ENCODE measurements at regions of chr1 and their contacts with region 1.

Region 1: DNA sequence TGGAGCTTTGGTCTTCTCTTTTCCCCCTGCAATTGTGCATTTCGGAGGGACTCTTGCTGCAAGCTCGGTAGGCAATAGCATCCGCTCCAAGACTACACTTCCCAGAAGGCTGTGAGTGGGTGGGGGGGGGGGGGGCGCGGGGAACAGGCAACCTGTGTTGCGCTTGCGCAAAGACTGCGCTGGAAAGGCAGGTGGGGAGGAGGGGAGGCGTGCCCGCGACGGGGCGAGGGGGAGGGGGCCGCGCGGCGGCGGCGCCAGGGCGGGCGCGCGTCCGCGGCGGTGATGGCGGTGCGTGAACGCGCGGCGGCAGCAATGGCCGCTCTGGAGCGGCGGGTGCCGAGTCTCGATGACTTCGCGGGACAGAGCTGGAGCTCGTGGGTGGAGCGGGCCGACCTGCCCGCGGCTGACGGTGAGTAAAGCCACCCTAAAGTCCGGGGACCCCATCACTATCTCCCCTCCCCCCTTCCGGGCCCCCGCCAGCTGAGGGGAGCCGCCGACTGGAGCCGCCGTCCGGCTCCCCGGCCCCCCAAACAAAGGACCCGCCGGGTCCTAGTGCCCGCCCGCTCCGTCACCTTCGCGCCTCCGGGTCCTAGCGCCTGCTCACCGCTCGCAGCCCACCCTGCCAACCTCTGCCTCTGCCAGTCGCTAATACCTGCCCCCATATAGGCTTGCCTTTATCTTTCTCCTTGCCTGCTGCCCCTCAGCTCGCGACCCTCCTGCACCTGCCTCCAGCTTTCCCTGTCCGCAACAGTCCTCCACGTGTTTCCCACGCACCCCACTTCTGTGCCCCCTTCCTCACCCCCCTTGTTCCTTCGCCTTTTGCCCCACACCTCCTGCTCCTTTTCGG is at the start of gene ATXN7L2:
- DNase-seq: peak; percentile 95
- ATAC-seq: peak; percentile 83
- H3K4me3 Mint-ChIP-seq: peak within 1 kb of the TSS; percentile 96
- H3K27ac Mint-ChIP-seq: peak within 1 kb of the TSS; percentile 93
- H3K4me1 Mint-ChIP-seq: peaks cover 28% of the 10 kb centered on the region
- H3K27me3 Mint-ChIP-seq: peaks cover 12% of the 10 kb centered on the region
- total RNA-seq, gene ATXN7L2: 10.4 to 12.4 TPM

Region 2: GRCh38 chr1:109426278-109427170 is 57.4 kb before region 1 on chr1 and contains the start of gene PSMA5:
- POLR2A ChIA-PET with region 1: interaction called, 37 read pairs
- DNase-seq: peak; percentile 89
- ATAC-seq: peak; percentile 93
- H3K4me3 Mint-ChIP-seq: peak within 1 kb of the TSS; percentile 93
- H3K27ac Mint-ChIP-seq: peak within 1 kb of the TSS; percentile 97
- H3K4me1 Mint-ChIP-seq: peaks cover 27% of the 10 kb centered on the region
- H3K27me3 Mint-ChIP-seq: no peaks in the 10 kb centered on the region
- total RNA-seq, gene PSMA5: 135 TPM

Region 3: DNA sequence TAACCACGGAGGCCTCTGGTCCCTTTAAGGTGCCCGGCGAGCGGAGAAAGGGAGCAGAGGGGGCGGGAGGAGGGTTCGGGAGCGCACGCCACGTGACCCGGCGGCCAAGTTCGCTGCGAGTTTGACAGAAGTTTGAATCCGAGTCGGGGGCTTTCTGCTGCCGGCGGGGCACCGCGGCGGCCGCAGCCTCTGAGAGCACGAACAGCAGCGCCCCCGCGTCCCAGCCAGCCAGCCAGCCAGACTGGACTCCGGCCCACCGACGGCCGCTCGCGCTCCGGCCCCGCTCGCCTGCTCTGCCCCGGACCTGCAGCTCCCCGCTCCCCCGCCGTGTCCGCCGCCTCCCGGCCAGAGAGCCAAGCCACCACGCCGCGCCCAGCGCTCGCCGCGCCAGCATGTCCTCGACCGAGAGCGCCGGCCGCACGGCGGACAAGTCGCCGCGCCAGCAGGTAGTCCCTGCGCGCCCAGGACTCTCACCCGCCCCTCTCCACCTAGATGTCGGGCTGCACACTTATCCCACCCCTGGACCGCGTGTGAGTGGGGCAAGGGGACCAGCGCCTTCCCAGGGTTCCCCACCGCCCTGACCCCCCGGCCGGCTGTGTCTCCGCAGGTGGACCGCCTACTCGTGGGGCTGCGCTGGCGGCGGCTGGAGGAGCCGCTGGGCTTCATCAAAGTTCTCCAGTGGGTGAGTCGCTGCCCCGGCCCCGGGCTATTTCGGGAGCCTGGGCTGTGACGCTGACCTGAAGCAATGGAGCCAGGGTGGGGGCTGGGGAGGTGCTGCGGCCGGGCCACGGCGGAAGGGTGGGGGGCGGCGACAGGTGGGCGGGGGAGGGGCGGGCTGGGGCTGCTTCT is 17.2 kb before region 1 on chr1 and contains the start of gene SYPL2:
- POLR2A ChIA-PET with region 1: no interaction called
- DNase-seq: peak; percentile 39
- ATAC-seq: peak; percentile 30
- H3K4me3 Mint-ChIP-seq: peak within 1 kb of the TSS; percentile 51
- H3K27ac Mint-ChIP-seq: no peak within 1 kb of the TSS
- H3K4me1 Mint-ChIP-seq: peaks cover 4% of the 10 kb centered on the region
- H3K27me3 Mint-ChIP-seq: peaks cover 91% of the 10 kb centered on the region
- total RNA-seq, gene SYPL2: not detected

Region 4: GRCh38 chr1:109493805-109494539 is 10.1 kb after region 1 on chr1 and contains the start of gene CYB561D1:
- POLR2A ChIA-PET with region 1: interaction called, 20 read pairs
- DNase-seq: peak; percentile 98
- ATAC-seq: peak; percentile 84
- H3K4me3 Mint-ChIP-seq: peak within 1 kb of the TSS; percentile 99
- H3K27ac Mint-ChIP-seq: peak within 1 kb of the TSS; percentile 86
- H3K4me1 Mint-ChIP-seq: peaks cover 34% of the 10 kb centered on the region
- H3K27me3 Mint-ChIP-seq: no peaks in the 10 kb centered on the region
- total RNA-seq, gene CYB561D1: 24.3 to 25.1 TPM

Region 5: DNA sequence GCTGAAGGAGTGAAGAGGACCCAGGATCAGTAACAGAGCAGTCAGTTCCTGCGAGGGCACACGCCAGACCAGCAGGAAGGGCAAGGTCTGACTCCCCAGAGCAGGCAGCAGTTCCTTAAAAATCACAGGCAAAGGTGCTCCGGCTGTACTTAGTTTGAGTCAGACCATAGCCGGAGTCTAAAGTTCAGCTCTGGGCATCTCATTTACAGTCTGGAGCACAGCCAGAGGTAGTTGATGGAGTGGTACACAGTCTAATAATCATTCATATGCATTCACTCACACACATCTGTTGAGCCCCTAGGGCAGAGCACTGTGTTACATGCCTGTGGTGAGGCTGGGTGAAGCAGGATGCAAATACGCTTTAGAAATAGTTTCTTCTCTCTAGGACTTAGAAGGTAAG is 33.0 kb after region 1 on chr1:
- POLR2A ChIA-PET with region 1: no interaction called
- DNase-seq: no peak
- ATAC-seq: no peak
- H3K4me3 Mint-ChIP-seq: no peak overlapping the region
- H3K27ac Mint-ChIP-seq: no peak overlapping the region
- H3K4me1 Mint-ChIP-seq: peaks cover 3% of the 10 kb centered on the region
- H3K27me3 Mint-ChIP-seq: peaks cover 7% of the 10 kb centered on the region